ENCODE measurements at regions of chr12 and their contacts with region 1.

Region 1: GRCh38 chr12:93297032-93297431 is 80.7 kb upstream of the NUDT4 start:
- DNase-seq: peak in 1 of 2 donors; percentile 8
- ATAC-seq: peak in 7 of 8 donors; percentile 11 to 68 (median 28)
- H3K4me3 ChIP-seq: no peak overlapping the region
- H3K27ac ChIP-seq: peak overlapping the region in 8 of 10 donors; percentile 6 to 72 (median 59)
- H3K4me1 ChIP-seq: peaks cover 0 to 28% (median 18%) of the 10 kb centered on the region in 9 donors
- H3K27me3 ChIP-seq: no peaks in the 10 kb centered on the region
- CTCF ChIP-seq: no peak

Region 2: GRCh38 chr12:91326058-91327027 is 1970.7 kb before region 1 on chr12:
- intact Hi-C with region 1: no loop called
- DNase-seq: peak in 1 of 2 donors; percentile 67
- ATAC-seq: peak in 5 of 8 donors; percentile 42 to 75 (median 69)
- H3K4me3 ChIP-seq: peak overlapping the region in 2 of 10 donors; percentile 14 to 18
- H3K27ac ChIP-seq: peak overlapping the region in 9 of 10 donors; percentile 4 to 73 (median 63)
- H3K4me1 ChIP-seq: peaks cover 0 to 6% (median 0%) of the 10 kb centered on the region in 9 donors
- H3K27me3 ChIP-seq: no peaks in the 10 kb centered on the region
- CTCF ChIP-seq: peak; percentile 61 to 86 (median 78)

Region 3: DNA sequence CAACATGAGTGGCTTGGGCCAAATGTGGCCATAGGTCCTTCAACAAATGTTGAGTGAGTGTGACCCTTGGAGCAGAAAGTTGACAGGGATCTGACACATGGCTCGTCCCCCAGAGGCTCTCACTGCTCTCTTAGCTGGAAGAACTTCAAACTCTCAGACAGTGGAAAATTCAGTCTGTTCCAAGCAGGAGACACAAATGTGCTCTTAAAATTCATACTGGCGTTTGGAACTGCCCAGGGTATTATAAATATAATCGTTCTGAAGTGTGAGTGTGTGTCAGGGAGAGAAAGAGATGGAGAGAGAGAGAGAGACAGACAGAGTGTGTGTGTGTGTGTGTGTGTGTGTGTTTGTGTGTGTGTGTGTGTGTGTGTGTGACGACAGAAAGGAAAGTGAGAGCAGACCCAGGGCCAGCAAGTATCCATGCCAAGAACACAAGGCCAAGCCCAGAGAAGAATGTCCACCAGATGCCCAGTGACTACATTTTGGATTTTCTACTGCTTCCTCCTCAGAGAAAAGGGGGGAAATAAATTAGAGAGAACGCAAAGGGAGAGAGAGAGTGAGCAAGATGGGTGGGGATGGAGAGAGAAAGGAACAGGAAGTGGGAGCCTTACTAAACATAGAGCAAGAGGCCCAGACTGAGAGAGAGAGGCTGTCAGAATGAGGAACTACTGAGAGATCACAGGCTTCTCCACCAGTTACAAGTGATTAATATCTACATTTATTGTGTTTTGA is 112.9 kb before region 1 on chr12:
- intact Hi-C with region 1: loop called in 2 of 10 experiments (anchors 5 kb)
- DNase-seq: peak in 1 of 2 donors; percentile 65
- ATAC-seq: peak; percentile 66 to 92 (median 86)
- H3K4me3 ChIP-seq: no peak overlapping the region
- H3K27ac ChIP-seq: peak overlapping the region; percentile 77 to 92 (median 88)
- H3K4me1 ChIP-seq: peaks cover 9 to 34% (median 24%) of the 10 kb centered on the region in 9 donors
- H3K27me3 ChIP-seq: no peaks in the 10 kb centered on the region
- CTCF ChIP-seq: no peak

Region 4: GRCh38 chr12:93243689-93244513 is 53.1 kb before region 1 on chr12:
- intact Hi-C with region 1: loop called in 1 of 10 experiments (anchors 5 kb)
- DNase-seq: peak in 1 of 2 donors; percentile 17
- ATAC-seq: peak; percentile 30 to 79 (median 44)
- H3K4me3 ChIP-seq: peak overlapping the region in 1 of 10 donors; percentile 4
- H3K27ac ChIP-seq: peak overlapping the region in 5 of 10 donors; percentile 5 to 82 (median 25)
- H3K4me1 ChIP-seq: peaks cover 0 to 47% (median 19%) of the 10 kb centered on the region in 9 donors
- H3K27me3 ChIP-seq: no peaks in the 10 kb centered on the region
- CTCF ChIP-seq: no peak

Region 5: DNA sequence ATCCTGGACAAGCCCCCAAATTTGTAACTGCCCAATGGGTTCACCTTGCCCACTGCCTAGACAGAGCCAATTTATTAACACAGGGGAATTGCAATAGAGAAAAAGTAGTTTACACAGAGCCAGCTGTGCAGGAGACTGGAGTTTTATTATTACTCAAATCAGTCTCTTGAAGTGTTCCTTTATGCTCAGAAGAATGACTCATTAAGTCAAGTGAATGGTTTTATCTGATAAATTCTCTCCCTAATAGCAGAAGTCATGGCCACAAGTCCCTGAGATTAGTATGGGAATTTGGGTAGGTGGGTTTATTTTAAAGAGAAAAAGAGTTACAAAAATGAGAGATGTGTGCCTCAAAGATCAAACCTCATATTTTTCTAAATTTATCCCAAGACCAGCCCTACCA is 42.1 kb before region 1 on chr12:
- intact Hi-C with region 1: loop called in 1 of 10 experiments (anchors 5 kb)
- DNase-seq: no peak
- ATAC-seq: no peak
- H3K4me3 ChIP-seq: no peak overlapping the region
- H3K27ac ChIP-seq: no peak overlapping the region
- H3K4me1 ChIP-seq: peaks cover 0 to 18% (median 8%) of the 10 kb centered on the region in 9 donors
- H3K27me3 ChIP-seq: no peaks in the 10 kb centered on the region
- CTCF ChIP-seq: no peak

Region 6: DNA sequence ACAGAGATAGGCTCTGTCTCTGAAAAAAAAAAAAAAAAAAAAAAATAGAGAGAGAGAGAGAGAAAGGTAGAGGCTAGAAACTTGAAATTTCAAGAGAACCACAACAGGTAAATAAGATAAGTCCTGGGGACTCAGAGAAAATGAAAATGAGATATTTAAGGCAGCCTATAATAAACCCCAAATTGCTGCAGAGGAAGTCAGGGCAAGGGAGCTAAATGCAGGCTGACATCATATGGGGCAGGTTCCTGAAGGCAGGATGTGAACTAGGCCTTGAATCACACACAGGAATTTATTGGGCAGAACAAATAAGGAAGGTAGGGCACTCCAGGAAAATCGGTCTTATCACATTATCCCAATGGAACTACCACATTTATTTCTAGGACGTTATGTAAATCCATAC is 25.8 kb after region 1 on chr12:
- intact Hi-C with region 1: no loop called
- DNase-seq: no peak
- ATAC-seq: no peak
- H3K4me3 ChIP-seq: no peak overlapping the region
- H3K27ac ChIP-seq: no peak overlapping the region
- H3K4me1 ChIP-seq: peaks cover 0 to 9% (median 0%) of the 10 kb centered on the region in 9 donors
- H3K27me3 ChIP-seq: no peaks in the 10 kb centered on the region
- CTCF ChIP-seq: no peak

Region 7: GRCh38 chr12:94020335-94020734 is 723.3 kb after region 1 on chr12:
- intact Hi-C with region 1: no loop called
- DNase-seq: no peak
- ATAC-seq: peak in 1 of 8 donors; percentile 52
- H3K4me3 ChIP-seq: no peak overlapping the region
- H3K27ac ChIP-seq: no peak overlapping the region
- H3K4me1 ChIP-seq: no peaks in the 10 kb centered on the region
- H3K27me3 ChIP-seq: no peaks in the 10 kb centered on the region
- CTCF ChIP-seq: no peak

Measured in heart right ventricle (tissue), 16 donors.